ENCODE measurements at regions of chr12 and their contacts with region 1.

Region 1: GRCh38 chr12:26937875-26938700 is at the starts of genes FGFR1OP2 and INTS13:
- DNase-seq: peak; percentile 82 to 96 (median 93)
- ATAC-seq: peak; percentile 95
- H3K4me3 ChIP-seq: peak within 1 kb of the TSS; percentile 96
- H3K4me3 Mint-ChIP-seq: peak within 1 kb of the TSS; percentile 87 to 99 (median 97)
- H3K27ac ChIP-seq: peak within 1 kb of the TSS; percentile 94
- H3K27ac Mint-ChIP-seq: peak within 1 kb of the TSS; percentile 91 to 99 (median 95)
- H3K4me1 ChIP-seq: peaks cover 32 to 35% of the 10 kb centered on the region in 2 donors
- H3K4me1 Mint-ChIP-seq: peaks cover 42 to 79% (median 68%) of the 10 kb centered on the region in 7 donors
- H3K27me3 ChIP-seq: no peaks in the 10 kb centered on the region
- H3K27me3 Mint-ChIP-seq: peaks cover 0 to 3% (median 0%) of the 10 kb centered on the region in 5 donors
- total RNA-seq, gene FGFR1OP2: 35.6 to 84.0 (median 79.0) TPM
- total RNA-seq, gene INTS13: 13.2 to 46.7 (median 19.0) TPM

Region 2: GRCh38 chr12:25195056-25195971 is 1742.8 kb before region 1 on chr12 and contains the starts of genes DNAI7 and ETFRF1:
- CTCF ChIA-PET with region 1: no interaction called
- POLR2A ChIA-PET with region 1: interaction called, 3 read pairs
- intact Hi-C with region 1: loop called in 1 of 2 experiments (anchors 10 kb)
- DNase-seq: peak; percentile 93 to 98 (median 96)
- ATAC-seq: peak; percentile 99
- H3K4me3 ChIP-seq: peak within 1 kb of the TSS; percentile 90
- H3K4me3 Mint-ChIP-seq: peak within 1 kb of the TSS; percentile 89 to 100 (median 99)
- H3K27ac ChIP-seq: peak within 1 kb of the TSS; percentile 92
- H3K27ac Mint-ChIP-seq: peak within 1 kb of the TSS; percentile 97 to 100 (median 99)
- H3K4me1 ChIP-seq: peaks cover 7 to 8% of the 10 kb centered on the region in 2 donors
- H3K4me1 Mint-ChIP-seq: peaks cover 14 to 59% (median 47%) of the 10 kb centered on the region in 7 donors
- H3K27me3 ChIP-seq: no peaks in the 10 kb centered on the region
- H3K27me3 Mint-ChIP-seq: peaks cover 0 to 3% (median 0%) of the 10 kb centered on the region in 5 donors
- total RNA-seq, gene DNAI7: 0.34 to 0.72 (median 0.50) TPM in 4 of 5 experiments, not detected in the other
- total RNA-seq, gene ETFRF1: 12.9 to 39.5 (median 34.4) TPM

Region 3: DNA sequence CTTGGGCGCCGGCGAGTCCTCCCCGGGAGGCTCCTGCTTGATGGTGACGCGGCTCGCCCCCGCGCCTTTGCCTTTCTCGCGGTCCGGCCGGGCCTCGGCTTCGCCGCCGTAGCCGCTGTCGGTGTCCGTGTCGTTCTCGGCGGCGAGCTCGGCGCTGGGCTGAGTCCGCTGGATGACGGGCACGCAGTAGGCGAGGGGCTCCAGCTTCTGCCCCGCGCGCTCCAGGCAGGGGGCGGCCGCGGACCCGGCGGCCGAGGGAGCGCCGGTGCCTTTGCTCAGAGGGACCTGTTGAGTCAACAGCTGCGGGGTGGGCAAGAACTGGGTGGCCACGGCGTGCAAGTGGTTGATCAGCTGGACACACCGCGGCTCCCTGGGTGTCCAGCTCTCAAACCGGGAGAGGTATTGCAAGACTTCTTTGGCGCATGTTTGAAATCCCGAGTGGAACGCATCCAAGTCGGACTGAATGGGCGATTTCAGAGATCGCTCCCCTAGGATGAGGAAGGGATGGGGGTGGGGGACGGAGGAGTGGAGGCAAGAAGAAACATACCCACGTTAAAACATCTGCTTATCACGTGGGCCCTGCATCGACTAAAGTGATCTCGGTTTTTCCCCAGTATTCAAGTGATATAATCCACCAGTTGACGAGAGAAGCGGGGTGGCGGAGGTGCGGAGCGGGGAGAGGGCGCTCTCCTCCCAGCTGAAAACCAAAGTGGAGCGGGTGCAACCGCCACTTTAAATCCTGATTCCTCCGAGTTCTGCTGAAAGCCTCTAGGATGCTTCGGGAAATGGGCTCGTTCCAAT is 815.2 kb before region 1 on chr12:
- CTCF ChIA-PET with region 1: no interaction called
- POLR2A ChIA-PET with region 1: no interaction called
- intact Hi-C with region 1: loop called in 1 of 2 experiments (anchors 2 kb)
- DNase-seq: peak in 7 of 9 donors; percentile 16 to 51 (median 22)
- ATAC-seq: peak; percentile 44
- H3K4me3 ChIP-seq: peak overlapping the region; percentile 39
- H3K4me3 Mint-ChIP-seq: peak overlapping the region; percentile 80 to 91 (median 88)
- H3K27ac ChIP-seq: no peak overlapping the region
- H3K27ac Mint-ChIP-seq: peak overlapping the region in 3 of 9 donors; percentile 46 to 75 (median 58)
- H3K4me1 ChIP-seq: peaks cover 12 to 21% of the 10 kb centered on the region in 2 donors
- H3K4me1 Mint-ChIP-seq: peaks cover 22 to 49% (median 41%) of the 10 kb centered on the region in 7 donors
- H3K27me3 ChIP-seq: peaks cover 23 to 42% of the 10 kb centered on the region in 2 donors
- H3K27me3 Mint-ChIP-seq: peaks cover 67 to 86% (median 78%) of the 10 kb centered on the region in 5 donors

Region 4: DNA sequence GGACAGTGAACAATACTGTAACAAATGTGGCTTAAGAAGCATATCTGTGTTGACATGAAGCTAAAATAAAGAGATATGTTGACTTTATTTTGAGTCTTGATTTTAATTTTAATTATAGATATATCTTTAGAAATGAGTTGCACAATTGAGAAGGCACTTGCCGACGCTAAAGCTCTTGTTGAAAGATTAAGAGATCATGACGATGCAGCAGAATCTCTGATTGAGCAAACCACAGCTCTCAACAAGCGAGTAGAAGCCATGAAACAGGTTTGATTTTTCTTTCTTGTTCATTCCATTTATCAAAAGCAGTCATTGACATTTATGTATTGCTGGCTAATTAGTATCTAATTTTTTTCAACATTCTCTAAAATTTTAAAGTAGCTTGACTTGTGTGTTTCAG is 15.9 kb after region 1 on chr12:
- CTCF ChIA-PET with region 1: no interaction called
- POLR2A ChIA-PET with region 1: interaction called, 6 read pairs
- intact Hi-C with region 1: loop called in 1 of 2 experiments (anchors 1 kb)
- DNase-seq: no peak
- ATAC-seq: no peak
- H3K4me3 ChIP-seq: no peak overlapping the region
- H3K4me3 Mint-ChIP-seq: peak overlapping the region in 1 of 10 donors; percentile 50
- H3K27ac ChIP-seq: no peak overlapping the region
- H3K27ac Mint-ChIP-seq: peak overlapping the region in 6 of 9 donors; percentile 10 to 77 (median 33)
- H3K4me1 ChIP-seq: peaks cover 11 to 12% of the 10 kb centered on the region in 2 donors
- H3K4me1 Mint-ChIP-seq: peaks cover 18 to 67% (median 46%) of the 10 kb centered on the region in 7 donors
- H3K27me3 ChIP-seq: no peaks in the 10 kb centered on the region
- H3K27me3 Mint-ChIP-seq: no peaks in the 10 kb centered on the region

Region 5: GRCh38 chr12:27142101-27142721 is 204.1 kb after region 1 on chr12:
- CTCF ChIA-PET with region 1: no interaction called
- POLR2A ChIA-PET with region 1: no interaction called
- intact Hi-C with region 1: loop called in 1 of 2 experiments (anchors 5 kb)
- DNase-seq: peak in 7 of 9 donors; percentile 7 to 32 (median 15)
- ATAC-seq: peak; percentile 80
- H3K4me3 ChIP-seq: no peak overlapping the region
- H3K4me3 Mint-ChIP-seq: no peak overlapping the region
- H3K27ac ChIP-seq: no peak overlapping the region
- H3K27ac Mint-ChIP-seq: no peak overlapping the region
- H3K4me1 ChIP-seq: no peaks in the 10 kb centered on the region
- H3K4me1 Mint-ChIP-seq: peaks cover 1 to 30% (median 11%) of the 10 kb centered on the region in 7 donors
- H3K27me3 ChIP-seq: no peaks in the 10 kb centered on the region
- H3K27me3 Mint-ChIP-seq: peaks cover 0 to 5% (median 0%) of the 10 kb centered on the region in 5 donors

Region 6: DNA sequence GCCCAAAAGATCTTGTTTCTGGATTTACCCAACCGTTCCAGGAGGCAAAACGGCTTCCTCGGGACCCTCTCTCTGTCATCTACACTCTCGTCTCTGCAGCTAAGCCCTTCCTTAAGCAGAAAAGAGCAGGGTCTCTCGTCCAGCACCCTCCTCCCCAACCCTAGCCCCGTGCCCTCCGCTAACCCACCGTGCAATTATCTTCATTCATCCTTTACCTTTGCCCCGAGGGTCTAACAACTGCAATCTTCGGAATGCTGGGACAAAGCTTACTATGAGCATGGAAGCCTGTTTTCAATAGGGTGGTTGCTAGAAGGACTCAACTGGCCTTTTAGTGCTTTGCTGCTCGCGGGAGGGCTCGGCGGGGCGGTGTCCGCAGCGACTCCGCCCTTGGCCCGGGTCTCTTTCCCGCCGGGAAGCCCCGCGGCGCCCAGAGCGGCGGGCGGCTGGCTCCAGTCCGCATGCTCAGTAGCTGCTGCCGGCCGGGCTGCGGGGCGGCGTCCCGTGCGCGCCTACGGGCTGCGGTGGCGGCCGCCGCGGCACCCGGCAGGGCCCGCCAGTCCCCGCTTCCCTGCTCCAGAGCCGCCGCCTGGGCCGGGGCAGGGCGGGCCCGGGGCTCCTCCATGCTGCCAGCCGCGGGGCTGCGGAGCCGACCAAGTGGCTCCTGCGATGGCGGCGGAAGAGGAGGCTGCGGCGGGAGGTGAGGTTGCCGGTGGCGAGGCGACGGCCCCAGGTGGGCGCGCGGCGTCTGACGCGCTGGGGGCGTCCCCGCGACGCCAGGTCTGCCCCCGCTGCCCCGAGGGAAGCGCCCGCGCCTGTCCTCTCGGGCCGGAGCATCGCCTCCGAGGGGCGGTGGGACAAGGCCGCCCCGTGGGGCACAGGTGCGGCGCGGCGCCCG is 394.6 kb after region 1 on chr12 and contains the start of gene BMAL2:
- CTCF ChIA-PET with region 1: no interaction called
- POLR2A ChIA-PET with region 1: no interaction called
- intact Hi-C with region 1: loop called in 1 of 2 experiments (anchors 2 kb)
- DNase-seq: peak in 8 of 9 donors; percentile 12 to 70 (median 16)
- ATAC-seq: peak; percentile 62
- H3K4me3 ChIP-seq: peak within 1 kb of the TSS; percentile 46
- H3K4me3 Mint-ChIP-seq: peak within 1 kb of the TSS; percentile 80 to 97 (median 88)
- H3K27ac ChIP-seq: no peak within 1 kb of the TSS
- H3K27ac Mint-ChIP-seq: peak within 1 kb of the TSS in 1 of 9 donors; percentile 94
- H3K4me1 ChIP-seq: peaks cover 4% of the 10 kb centered on the region in 2 donors
- H3K4me1 Mint-ChIP-seq: peaks cover 7 to 51% (median 15%) of the 10 kb centered on the region in 7 donors
- H3K27me3 ChIP-seq: peaks cover 0 to 8% of the 10 kb centered on the region in 2 donors
- H3K27me3 Mint-ChIP-seq: peaks cover 7 to 48% (median 46%) of the 10 kb centered on the region in 5 donors
- total RNA-seq, gene BMAL2: 0.19 to 37.7 (median 0.41) TPM in 4 of 5 experiments, not detected in the other

Region 7: DNA sequence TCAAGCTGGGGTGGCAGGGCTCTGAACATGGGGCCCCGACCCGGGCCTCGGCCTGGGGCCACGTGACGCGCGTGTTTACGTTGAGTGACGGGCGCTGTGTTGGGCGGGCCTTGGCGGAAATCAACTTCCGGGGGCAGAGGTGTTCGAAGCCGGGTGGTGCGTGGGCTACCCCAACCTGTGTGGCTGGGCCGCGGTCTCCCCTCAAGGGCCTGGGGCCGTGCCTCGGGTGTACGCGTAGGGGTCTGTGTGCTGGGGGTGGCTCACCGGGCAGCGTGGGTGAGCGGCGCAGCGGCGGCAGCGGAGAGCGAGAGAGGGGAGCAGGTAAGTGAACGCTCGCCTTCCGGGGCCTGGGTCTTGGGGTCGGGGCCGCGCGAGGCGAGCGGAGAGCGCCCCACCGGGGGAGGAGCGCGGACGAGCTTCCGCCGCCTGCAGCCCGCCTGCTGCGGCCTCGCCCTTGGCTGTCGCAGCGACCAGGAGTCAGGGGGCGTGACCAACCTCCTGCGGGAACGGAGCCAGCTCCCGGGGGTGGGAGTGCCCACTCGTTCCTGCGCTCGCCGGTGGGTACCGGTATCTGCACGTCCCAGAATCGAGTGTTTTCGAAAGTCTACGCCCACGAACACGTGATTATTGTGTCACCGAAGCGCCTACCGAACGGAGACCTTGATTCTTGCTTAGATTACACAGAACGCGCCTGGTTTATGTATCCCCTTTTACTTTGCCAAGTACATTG is 1252.4 kb after region 1 on chr12 and contains the start of gene CCDC91:
- CTCF ChIA-PET with region 1: no interaction called
- POLR2A ChIA-PET with region 1: no interaction called
- intact Hi-C with region 1: loop called in 1 of 2 experiments (anchors 5 kb)
- DNase-seq: peak; percentile 83 to 95 (median 90)
- ATAC-seq: peak; percentile 90
- H3K4me3 ChIP-seq: peak within 1 kb of the TSS; percentile 80
- H3K4me3 Mint-ChIP-seq: peak within 1 kb of the TSS; percentile 88 to 98 (median 96)
- H3K27ac ChIP-seq: peak within 1 kb of the TSS; percentile 98
- H3K27ac Mint-ChIP-seq: peak within 1 kb of the TSS; percentile 98 to 100 (median 99)
- H3K4me1 ChIP-seq: peaks cover 19 to 25% of the 10 kb centered on the region in 2 donors
- H3K4me1 Mint-ChIP-seq: peaks cover 27 to 79% (median 68%) of the 10 kb centered on the region in 7 donors
- H3K27me3 ChIP-seq: no peaks in the 10 kb centered on the region
- H3K27me3 Mint-ChIP-seq: no peaks in the 10 kb centered on the region
- total RNA-seq, gene CCDC91: 20.2 to 105 (median 70.4) TPM

Measured in naive thymus-derived CD4-positive, alpha-beta T cell (primary cell).